ENCODE measurements at regions of chr22 and their contacts with region 1.

Region 1: GRCh38 chr22:30277547-30278344 is 11.1 kb upstream of the OSM start:
- DNase-seq: no peak
- H3K4me3 Mint-ChIP-seq: no peak overlapping the region
- H3K27ac Mint-ChIP-seq: no peak overlapping the region
- H3K4me1 Mint-ChIP-seq: peaks cover 30% of the 10 kb centered on the region
- H3K27me3 Mint-ChIP-seq: no peaks in the 10 kb centered on the region

Region 2: DNA sequence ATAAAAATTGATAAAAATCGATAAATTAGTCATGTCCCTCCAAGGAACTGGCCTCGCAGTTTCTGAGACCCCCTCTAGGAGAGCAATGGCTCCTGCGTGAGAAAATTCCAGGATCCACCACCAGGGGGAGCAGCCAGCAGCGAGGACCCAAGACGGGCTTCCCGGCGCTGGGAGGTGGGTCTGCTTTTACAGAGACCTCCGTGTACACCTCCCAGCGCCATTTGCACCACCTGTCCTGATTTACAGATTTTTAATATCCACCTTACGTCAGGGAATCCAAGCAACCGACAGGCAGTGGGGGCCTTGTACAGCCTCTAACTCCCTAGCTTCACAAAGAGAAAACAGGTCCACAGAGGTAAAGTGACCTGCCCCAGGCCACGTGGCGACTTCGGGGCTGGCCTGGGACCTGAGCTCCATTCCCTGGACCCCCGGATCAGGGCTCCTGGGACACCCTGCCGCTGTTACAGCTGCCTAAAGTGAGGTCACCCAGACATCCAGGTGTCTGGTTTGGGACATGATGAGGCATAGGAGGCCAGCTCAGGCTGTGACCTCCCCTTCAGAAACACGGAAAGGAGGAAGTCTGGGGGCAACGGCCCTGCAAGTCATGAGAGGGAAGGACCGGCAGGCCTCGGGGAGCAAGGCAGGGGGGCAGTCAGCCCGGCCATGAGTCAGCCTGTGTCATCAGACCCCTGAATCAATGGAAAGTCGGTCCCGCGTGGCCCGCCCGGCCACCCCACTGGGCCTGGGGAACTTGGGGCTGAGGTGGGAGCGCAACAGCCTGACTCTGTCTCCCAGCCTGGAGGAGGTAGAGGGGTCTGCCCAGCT is 14.6 kb before region 1 on chr22:
- CTCF ChIA-PET with region 1: interaction called, 11 read pairs
- intact Hi-C with region 1: loop called (anchors 1 kb)
- DNase-seq: peak; percentile 87
- H3K4me3 Mint-ChIP-seq: peak overlapping the region; percentile 65
- H3K27ac Mint-ChIP-seq: peak overlapping the region; percentile 43
- H3K4me1 Mint-ChIP-seq: peaks cover 39% of the 10 kb centered on the region
- H3K27me3 Mint-ChIP-seq: no peaks in the 10 kb centered on the region

Region 3: DNA sequence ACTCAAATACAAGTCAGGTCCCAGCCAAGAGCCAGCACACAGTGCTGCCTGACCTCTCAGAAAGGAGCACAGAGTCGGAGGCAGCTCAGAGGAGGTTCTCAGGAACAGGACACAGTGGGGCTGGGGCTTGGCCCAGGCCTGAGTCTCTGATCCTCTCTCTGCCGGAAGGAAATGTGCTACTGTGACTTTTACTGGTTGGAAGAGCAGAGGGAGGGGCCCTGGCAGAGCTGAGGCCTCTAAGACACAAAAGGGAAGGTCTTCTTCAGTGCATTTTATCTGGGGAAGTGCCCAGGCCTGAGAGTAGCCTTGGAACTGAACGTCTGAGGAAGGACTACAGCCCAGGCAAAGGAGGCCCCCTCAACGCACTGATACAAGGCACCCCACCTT is 27.8 kb after region 1 on chr22:
- CTCF ChIA-PET with region 1: no interaction called
- intact Hi-C with region 1: no loop called
- DNase-seq: peak; percentile 78
- H3K4me3 Mint-ChIP-seq: peak overlapping the region; percentile 70
- H3K27ac Mint-ChIP-seq: peak overlapping the region; percentile 97
- H3K4me1 Mint-ChIP-seq: peaks cover 98% of the 10 kb centered on the region
- H3K27me3 Mint-ChIP-seq: no peaks in the 10 kb centered on the region

Region 4: GRCh38 chr22:30541961-30542810 is 264.4 kb after region 1 on chr22:
- CTCF ChIA-PET with region 1: no interaction called
- intact Hi-C with region 1: no loop called
- DNase-seq: no peak
- H3K4me3 Mint-ChIP-seq: no peak overlapping the region
- H3K27ac Mint-ChIP-seq: no peak overlapping the region
- H3K4me1 Mint-ChIP-seq: peaks cover 4% of the 10 kb centered on the region
- H3K27me3 Mint-ChIP-seq: peaks cover 28% of the 10 kb centered on the region